Activated naive CD4-positive, alpha-beta T cell treated with anti-CD3 and anti-CD28 coated beads, Interleukin-2, amount 10 ng/mL, durations not matched to agents 7 days and 5 days (primary cell): ENCODE measurements at regions of chr11 and their contacts with region 1.

Region 1: DNA sequence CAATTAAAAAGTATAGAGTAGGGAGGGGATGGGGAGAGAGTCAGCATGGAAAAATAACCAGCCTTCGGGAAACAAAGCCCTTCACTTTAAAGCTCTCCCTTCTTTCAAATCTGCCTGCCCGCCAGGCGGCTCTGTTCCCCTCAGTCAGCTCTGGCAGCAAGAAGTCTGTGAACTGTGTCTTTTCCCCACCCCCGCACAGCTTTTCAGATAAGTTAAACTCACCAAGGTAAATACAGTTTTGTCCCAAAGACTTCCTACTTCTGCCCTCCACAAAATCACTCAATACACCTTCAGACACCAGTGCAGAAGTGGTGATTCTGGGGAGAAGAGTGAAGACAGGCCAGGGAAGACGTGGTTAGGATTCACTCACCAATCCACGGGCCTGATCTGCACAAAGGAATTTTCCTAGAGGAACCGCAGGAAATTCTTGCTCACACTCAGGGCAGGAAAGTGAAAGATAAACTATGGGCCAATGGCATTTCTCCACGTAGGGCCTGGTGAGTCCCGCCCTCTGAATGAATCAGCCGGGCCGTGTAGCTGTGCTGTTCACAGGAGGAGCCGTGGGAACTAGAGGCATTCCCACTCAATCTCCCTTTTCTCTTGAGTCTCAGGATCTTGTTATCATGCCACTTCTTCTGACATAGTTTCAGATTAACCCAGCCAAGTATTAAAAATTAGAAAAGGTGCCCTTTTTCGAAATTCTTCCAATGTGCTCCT is at the start of gene TRIM5:
- DNase-seq: peak; percentile 85
- H3K4me3 Mint-ChIP-seq: peak within 1 kb of the TSS; percentile 85
- H3K27ac Mint-ChIP-seq: peak within 1 kb of the TSS; percentile 90
- H3K4me1 Mint-ChIP-seq: peaks cover 51% of the 10 kb centered on the region
- H3K27me3 Mint-ChIP-seq: no peaks in the 10 kb centered on the region

Region 2: DNA sequence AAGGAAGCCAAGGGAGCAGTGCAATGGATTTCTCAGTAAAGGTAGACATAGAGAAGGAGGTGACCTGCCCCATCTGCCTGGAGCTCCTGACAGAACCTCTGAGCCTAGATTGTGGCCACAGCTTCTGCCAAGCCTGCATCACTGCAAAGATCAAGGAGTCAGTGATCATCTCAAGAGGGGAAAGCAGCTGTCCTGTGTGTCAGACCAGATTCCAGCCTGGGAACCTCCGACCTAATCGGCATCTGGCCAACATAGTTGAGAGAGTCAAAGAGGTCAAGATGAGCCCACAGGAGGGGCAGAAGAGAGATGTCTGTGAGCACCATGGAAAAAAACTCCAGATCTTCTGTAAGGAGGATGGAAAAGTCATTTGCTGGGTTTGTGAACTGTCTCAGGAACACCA is 11.4 kb after region 1 on chr11:
- CTCF ChIA-PET with region 1: interaction called, 11 read pairs
- DNase-seq: no peak
- H3K4me3 Mint-ChIP-seq: no peak overlapping the region
- H3K27ac Mint-ChIP-seq: no peak overlapping the region
- H3K4me1 Mint-ChIP-seq: peaks cover 67% of the 10 kb centered on the region
- H3K27me3 Mint-ChIP-seq: no peaks in the 10 kb centered on the region

Region 3: DNA sequence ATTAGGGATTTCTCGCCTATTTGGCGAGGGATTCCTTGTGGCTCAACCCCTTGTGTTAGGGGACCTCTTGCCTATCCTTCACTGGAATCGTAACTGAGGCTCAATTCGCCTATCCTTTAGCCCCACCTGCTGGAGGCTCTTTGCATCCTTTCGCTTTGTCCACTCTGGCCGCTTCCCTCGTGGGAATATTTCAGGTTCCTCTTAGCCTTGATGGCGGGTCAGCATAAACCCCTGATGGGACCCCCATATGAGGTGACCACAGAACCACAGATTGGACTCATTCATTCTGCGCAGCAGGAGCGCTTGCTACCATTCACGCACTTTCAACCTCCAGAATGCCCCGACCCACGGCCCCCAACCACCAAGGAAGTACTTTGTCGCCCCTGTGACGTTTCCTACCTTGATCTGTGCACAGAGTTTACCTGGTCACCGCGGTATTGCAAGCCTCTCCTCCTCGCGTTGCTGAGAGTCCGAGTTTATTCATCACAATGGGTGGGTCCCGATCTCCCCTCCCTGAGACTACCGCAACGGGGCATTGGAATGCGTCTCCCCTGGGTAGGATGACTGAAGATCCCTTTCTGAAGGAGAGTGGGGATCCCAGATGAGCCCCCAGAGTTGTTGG is 123.8 kb after region 1 on chr11 and contains the start of gene OR52N2:
- CTCF ChIA-PET with region 1: interaction called, 12 read pairs
- DNase-seq: peak; percentile 80
- H3K4me3 Mint-ChIP-seq: peak within 1 kb of the TSS; percentile 89
- H3K27ac Mint-ChIP-seq: no peak within 1 kb of the TSS
- H3K4me1 Mint-ChIP-seq: peaks cover 10% of the 10 kb centered on the region
- H3K27me3 Mint-ChIP-seq: peaks cover 9% of the 10 kb centered on the region